MCF 10A (cell line): ENCODE measurements at regions of chr17 and their contacts with region 1.

Region 1: GRCh38 chr17:58577642-58578091 is 63.2 kb upstream of the MTMR4 start:
- DNase-seq: peak; percentile 70
- H3K4me3 Mint-ChIP-seq: no peak overlapping the region
- H3K27ac Mint-ChIP-seq: no peak overlapping the region
- H3K4me1 Mint-ChIP-seq: peaks cover 6% of the 10 kb centered on the region
- H3K27me3 Mint-ChIP-seq: no peaks in the 10 kb centered on the region
- CTCF ChIP-seq: peak; percentile 53

Region 2: GRCh38 chr17:58541249-58541648 is 36.4 kb before region 1 on chr17:
- CTCF ChIA-PET with region 1: interaction called, 10 read pairs
- POLR2A ChIA-PET with region 1: no interaction called
- intact Hi-C with region 1: no loop called
- DNase-seq: peak; percentile 24
- H3K4me3 Mint-ChIP-seq: no peak overlapping the region
- H3K27ac Mint-ChIP-seq: no peak overlapping the region
- H3K4me1 Mint-ChIP-seq: no peaks in the 10 kb centered on the region
- H3K27me3 Mint-ChIP-seq: no peaks in the 10 kb centered on the region
- CTCF ChIP-seq: peak; percentile 17

Region 3: GRCh38 chr17:58556833-58557250 is 20.8 kb before region 1 on chr17:
- CTCF ChIA-PET with region 1: interaction called, 18 read pairs
- POLR2A ChIA-PET with region 1: no interaction called
- intact Hi-C with region 1: no loop called
- DNase-seq: no peak
- H3K4me3 Mint-ChIP-seq: no peak overlapping the region
- H3K27ac Mint-ChIP-seq: no peak overlapping the region
- H3K4me1 Mint-ChIP-seq: no peaks in the 10 kb centered on the region
- H3K27me3 Mint-ChIP-seq: peaks cover 7% of the 10 kb centered on the region
- CTCF ChIP-seq: no peak

Region 4: DNA sequence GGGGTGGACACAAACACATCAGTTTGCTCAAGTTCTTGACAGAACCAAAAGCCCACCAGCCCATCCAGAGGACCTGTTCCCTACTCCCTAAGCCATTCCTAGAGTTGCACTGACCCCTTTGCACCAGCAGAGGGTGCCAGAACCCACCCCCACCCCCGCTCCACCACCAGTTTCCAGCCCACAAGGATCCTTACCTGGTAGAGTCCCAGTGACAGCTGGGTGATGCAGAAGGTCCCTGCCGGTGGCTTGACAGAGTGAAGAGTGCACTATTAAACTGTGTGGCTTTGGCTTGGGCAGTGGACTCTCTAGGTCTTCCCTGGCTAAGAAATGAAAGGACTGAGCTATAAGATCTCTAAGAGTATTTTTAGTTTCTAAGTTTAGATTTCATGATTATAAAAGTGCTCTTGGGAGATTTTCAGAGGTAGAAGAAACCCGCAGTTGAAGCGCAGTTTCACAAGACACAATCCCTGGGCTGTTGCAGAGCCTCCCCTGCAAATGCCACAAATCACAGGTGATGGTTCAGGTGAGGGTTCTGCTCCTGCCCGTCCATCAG is 10.1 kb after region 1 on chr17:
- CTCF ChIA-PET with region 1: interaction called, 39 read pairs
- POLR2A ChIA-PET with region 1: interaction called, 12 read pairs
- intact Hi-C with region 1: no loop called
- DNase-seq: peak; percentile 65
- H3K4me3 Mint-ChIP-seq: no peak overlapping the region
- H3K27ac Mint-ChIP-seq: no peak overlapping the region
- H3K4me1 Mint-ChIP-seq: no peaks in the 10 kb centered on the region
- H3K27me3 Mint-ChIP-seq: peaks cover 13% of the 10 kb centered on the region
- CTCF ChIP-seq: peak; percentile 89

Region 5: DNA sequence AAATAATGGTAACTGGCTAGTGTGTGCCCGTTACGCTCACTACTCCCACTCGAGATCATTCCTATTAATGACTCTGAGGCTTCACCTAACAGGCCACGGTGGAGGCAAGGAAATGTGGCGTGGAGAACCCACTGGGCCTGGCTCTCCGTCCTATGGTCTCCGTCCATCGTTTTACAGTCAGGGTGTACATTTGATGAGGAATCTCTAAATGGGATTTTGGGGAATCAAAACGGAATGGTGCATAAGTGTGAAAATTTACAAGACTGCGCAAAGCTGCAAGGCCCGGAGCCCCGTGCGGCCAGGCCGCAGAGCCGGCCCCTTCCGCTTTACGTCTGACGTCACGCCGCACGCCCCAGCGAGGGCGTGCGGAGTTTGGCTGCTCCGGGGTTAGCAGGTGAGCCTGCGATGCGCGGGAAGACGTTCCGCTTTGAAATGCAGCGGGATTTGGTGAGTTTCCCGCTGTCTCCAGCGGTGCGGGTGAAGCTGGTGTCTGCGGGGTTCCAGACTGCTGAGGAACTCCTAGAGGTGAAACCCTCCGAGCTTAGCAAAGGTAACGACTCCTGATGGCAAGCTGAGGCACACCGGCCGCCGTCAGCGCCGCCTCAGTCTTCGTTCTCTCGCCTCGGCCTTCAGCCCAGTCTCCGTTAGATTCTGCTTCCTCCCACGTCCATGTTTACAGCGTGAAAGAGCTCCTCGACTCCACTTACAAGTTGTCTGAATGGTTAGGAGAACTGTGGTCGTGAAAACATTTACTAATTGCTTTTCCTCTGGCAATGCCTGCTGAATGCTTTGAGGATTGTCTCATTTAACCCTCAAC is 114.8 kb after region 1 on chr17 and contains the start of gene RAD51C:
- CTCF ChIA-PET with region 1: interaction called, 3 read pairs
- POLR2A ChIA-PET with region 1: interaction called, 16 read pairs
- intact Hi-C with region 1: no loop called
- DNase-seq: peak; percentile 84
- H3K4me3 Mint-ChIP-seq: peak within 1 kb of the TSS; percentile 97
- H3K27ac Mint-ChIP-seq: peak within 1 kb of the TSS; percentile 91
- H3K4me1 Mint-ChIP-seq: peaks cover 12% of the 10 kb centered on the region
- H3K27me3 Mint-ChIP-seq: no peaks in the 10 kb centered on the region
- CTCF ChIP-seq: no peak
- total RNA-seq, gene RAD51C: 48.3 and 59.5 TPM in 2 replicates

Region 6: DNA sequence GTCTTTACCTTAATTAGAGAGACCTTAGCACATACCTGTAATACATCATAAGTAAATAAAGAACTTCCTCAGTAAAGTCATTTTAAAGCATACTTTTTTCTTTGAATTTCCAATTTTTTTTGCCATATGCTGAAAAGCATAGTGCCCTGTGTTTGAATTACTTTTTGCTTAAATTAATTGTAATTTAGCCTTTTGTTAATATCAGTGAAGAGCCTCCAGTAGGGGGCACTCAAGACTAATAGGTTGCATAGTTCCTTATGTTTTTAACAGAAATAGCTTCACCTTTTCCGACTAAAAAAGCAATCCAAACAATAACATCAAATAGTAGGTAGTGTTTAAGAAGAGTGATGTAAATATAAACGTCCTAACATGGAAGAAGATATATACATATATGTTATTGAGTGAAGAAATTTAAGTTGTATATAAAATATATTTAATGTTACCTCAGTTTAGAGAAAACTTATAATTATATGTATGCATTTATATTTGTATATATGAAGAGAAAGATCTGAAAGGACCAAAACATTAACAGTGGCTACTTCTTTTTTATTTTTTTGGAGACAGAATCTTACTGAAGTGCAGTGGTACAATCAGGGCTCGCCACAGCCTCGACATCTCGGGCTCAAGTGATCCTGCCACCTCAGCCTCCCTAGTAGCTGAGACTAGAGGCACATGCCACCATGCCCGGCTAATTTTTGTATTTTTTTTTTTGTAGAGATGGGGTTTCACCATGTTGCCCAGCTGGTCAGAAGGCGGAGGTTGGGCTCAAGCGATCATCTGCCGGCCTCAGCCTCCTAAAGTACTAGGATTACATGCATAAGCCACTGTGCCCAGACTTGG is 133.5 kb after region 1 on chr17:
- CTCF ChIA-PET with region 1: interaction called, 4 read pairs
- POLR2A ChIA-PET with region 1: no interaction called
- intact Hi-C with region 1: loop called (anchors 5 kb)
- DNase-seq: peak; percentile 72
- H3K4me3 Mint-ChIP-seq: no peak overlapping the region
- H3K27ac Mint-ChIP-seq: no peak overlapping the region
- H3K4me1 Mint-ChIP-seq: no peaks in the 10 kb centered on the region
- H3K27me3 Mint-ChIP-seq: no peaks in the 10 kb centered on the region
- CTCF ChIP-seq: peak; percentile 78